ENCODE measurements at regions of chr7 and their contacts with region 1.

Region 1: GRCh38 chr7:47337531-47337930 is 244.4 kb downstream of the TNS3 start:
- DNase-seq: peak; percentile 64
- H3K4me3 Mint-ChIP-seq: no peak overlapping the region
- H3K27ac Mint-ChIP-seq: peak overlapping the region; percentile 2
- H3K4me1 Mint-ChIP-seq: peaks cover 27% of the 10 kb centered on the region
- H3K27me3 Mint-ChIP-seq: no peaks in the 10 kb centered on the region
- CTCF ChIP-seq: no peak

Region 2: GRCh38 chr7:47232751-47233412 is 104.6 kb before region 1 on chr7:
- CTCF ChIA-PET with region 1: no interaction called
- POLR2A ChIA-PET with region 1: no interaction called
- intact Hi-C with region 1: no loop called
- DNase-seq: no peak
- H3K4me3 Mint-ChIP-seq: no peak overlapping the region
- H3K27ac Mint-ChIP-seq: no peak overlapping the region
- H3K4me1 Mint-ChIP-seq: peaks cover 2% of the 10 kb centered on the region
- H3K27me3 Mint-ChIP-seq: no peaks in the 10 kb centered on the region
- CTCF ChIP-seq: no peak

Region 3: GRCh38 chr7:47291461-47292081 is 46.0 kb before region 1 on chr7:
- CTCF ChIA-PET with region 1: interaction called, 3 read pairs
- POLR2A ChIA-PET with region 1: interaction called, 4 read pairs
- intact Hi-C with region 1: loop called (anchors 5 kb)
- DNase-seq: peak; percentile 94
- H3K4me3 Mint-ChIP-seq: peak overlapping the region; percentile 48
- H3K27ac Mint-ChIP-seq: peak overlapping the region; percentile 95
- H3K4me1 Mint-ChIP-seq: peaks cover 41% of the 10 kb centered on the region
- H3K27me3 Mint-ChIP-seq: no peaks in the 10 kb centered on the region
- CTCF ChIP-seq: no peak

Region 4: GRCh38 chr7:47361746-47362215 is 24.2 kb after region 1 on chr7:
- CTCF ChIA-PET with region 1: interaction called, 3 read pairs
- POLR2A ChIA-PET with region 1: interaction called, 15 read pairs
- intact Hi-C with region 1: no loop called
- DNase-seq: peak; percentile 97
- H3K4me3 Mint-ChIP-seq: peak overlapping the region; percentile 52
- H3K27ac Mint-ChIP-seq: no peak overlapping the region
- H3K4me1 Mint-ChIP-seq: no peaks in the 10 kb centered on the region
- H3K27me3 Mint-ChIP-seq: no peaks in the 10 kb centered on the region
- CTCF ChIP-seq: no peak

Region 5: GRCh38 chr7:47405921-47406792 is 68.6 kb after region 1 on chr7:
- CTCF ChIA-PET with region 1: no interaction called
- POLR2A ChIA-PET with region 1: no interaction called
- intact Hi-C with region 1: loop called (anchors 5 kb)
- DNase-seq: peak; percentile 93
- H3K4me3 Mint-ChIP-seq: peak overlapping the region; percentile 54
- H3K27ac Mint-ChIP-seq: peak overlapping the region; percentile 67
- H3K4me1 Mint-ChIP-seq: peaks cover 41% of the 10 kb centered on the region
- H3K27me3 Mint-ChIP-seq: no peaks in the 10 kb centered on the region
- CTCF ChIP-seq: no peak

Measured in MCF 10A (cell line).